ENCODE measurements at regions of chr2 and their contacts with region 1.

Region 1: GRCh38 chr2:68031542-68032160 is 31.2 kb downstream of the C1D start:
- DNase-seq: no peak
- H3K4me3 ChIP-seq: no peak overlapping the region
- H3K27ac ChIP-seq: no peak overlapping the region
- H3K4me1 ChIP-seq: peaks cover 0 to 4% of the 10 kb centered on the region in 2 donors
- H3K27me3 ChIP-seq: no peaks in the 10 kb centered on the region
- CTCF ChIP-seq: peak; percentile 56 to 76 (median 74)

Region 2: DNA sequence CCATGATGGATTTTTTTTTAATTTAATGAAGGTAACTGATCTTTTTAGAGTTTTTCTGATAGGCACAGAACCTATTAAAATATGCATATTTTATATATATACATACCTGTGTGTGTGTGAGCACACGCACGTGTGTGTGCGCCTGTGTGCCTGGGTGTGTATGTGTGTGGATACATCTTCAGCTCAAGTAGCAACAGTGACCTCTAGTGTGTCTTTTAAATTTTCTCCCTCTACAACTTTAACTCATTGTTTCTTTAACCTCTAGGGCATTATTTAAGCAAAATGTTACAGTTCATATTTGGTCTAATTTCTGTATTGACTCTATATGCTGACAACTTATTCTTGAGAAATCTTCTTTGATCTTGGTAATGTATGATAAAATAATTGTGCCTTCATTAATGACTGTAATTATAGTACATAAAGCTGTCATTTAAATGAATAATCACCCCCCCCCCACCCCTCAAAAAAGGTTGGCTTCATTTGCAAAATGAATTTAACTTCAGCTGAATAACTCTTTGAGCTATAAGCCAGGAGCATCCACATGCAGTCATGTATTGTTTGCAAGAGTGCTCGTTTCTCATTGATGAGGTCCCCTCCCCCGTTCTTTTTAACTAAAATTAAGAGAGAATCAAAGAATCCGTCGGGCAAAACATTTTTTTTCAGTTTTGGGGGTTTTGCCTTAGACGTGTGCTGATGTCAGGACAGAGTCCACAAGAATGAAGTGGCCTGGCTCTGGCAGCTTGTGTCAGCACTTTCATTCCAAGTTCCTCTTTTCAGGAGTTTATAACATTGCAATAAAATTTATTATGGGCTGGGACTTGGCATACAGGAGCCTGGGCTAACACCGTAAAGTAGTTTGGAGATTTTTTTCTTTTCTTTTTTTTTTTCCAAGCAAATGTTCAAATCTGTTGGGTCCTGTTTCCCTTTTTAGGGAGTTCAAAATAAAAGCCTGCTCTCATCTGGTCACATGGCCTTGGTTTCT is 554.6 kb before region 1 on chr2:
- intact Hi-C with region 1: loop called (anchors 10 kb)
- DNase-seq: no peak
- H3K4me3 ChIP-seq: no peak overlapping the region
- H3K27ac ChIP-seq: no peak overlapping the region
- H3K4me1 ChIP-seq: peaks cover 0 to 2% of the 10 kb centered on the region in 2 donors
- H3K27me3 ChIP-seq: no peaks in the 10 kb centered on the region
- CTCF ChIP-seq: peak in 1 of 3 experiments; percentile 43

Region 3: DNA sequence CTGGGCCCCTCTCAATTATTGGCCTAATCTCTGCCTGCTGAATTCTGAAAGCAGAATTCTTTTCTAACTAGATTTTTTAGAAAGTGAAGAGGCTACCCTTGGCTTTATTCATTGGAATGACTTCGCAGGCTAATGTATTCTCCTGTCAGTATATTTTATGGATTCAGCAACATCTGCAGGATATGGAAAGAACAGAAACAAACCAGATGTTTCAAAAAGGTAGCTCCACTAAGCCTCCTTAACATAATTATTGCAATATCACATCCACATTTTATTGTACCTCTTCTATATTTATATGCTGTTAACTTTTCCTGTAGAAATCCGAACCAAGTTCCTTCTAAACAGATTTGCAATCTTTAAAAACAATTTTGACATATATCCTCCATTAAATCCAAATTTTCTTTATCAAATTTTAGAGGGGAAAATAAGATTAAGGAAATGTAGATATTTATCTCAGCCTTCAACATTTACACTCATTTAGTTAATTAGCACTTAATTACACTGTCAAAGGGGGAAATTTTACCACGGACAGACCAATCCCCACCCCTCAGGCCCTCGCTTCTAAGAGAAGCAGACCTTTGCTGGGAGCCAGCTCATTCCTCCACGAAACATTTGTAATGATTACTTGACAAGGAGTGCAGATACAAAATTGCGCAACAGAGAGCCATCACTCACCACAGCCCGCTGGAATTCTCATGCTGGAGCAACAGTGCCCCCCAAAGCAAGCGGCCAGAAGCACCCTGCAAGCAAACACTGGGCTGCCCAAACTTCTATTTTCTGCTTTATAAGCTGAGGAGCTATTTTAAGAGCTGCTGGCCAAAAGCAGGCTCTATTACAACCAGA is 381.1 kb before region 1 on chr2:
- intact Hi-C with region 1: loop called (anchors 5 kb)
- DNase-seq: peak; percentile 31 to 92
- H3K4me3 ChIP-seq: no peak overlapping the region
- H3K27ac ChIP-seq: peak overlapping the region; percentile 23 to 61
- H3K4me1 ChIP-seq: peaks cover 5 to 23% of the 10 kb centered on the region in 2 donors
- H3K27me3 ChIP-seq: no peaks in the 10 kb centered on the region
- CTCF ChIP-seq: peak; percentile 44 to 73 (median 65)